Activated naive CD4-positive, alpha-beta T cell treated with anti-CD3 and anti-CD28 coated beads for 36 hours (primary cell): ENCODE measurements at regions of chr1 and their contacts with region 1.

Region 1: DNA sequence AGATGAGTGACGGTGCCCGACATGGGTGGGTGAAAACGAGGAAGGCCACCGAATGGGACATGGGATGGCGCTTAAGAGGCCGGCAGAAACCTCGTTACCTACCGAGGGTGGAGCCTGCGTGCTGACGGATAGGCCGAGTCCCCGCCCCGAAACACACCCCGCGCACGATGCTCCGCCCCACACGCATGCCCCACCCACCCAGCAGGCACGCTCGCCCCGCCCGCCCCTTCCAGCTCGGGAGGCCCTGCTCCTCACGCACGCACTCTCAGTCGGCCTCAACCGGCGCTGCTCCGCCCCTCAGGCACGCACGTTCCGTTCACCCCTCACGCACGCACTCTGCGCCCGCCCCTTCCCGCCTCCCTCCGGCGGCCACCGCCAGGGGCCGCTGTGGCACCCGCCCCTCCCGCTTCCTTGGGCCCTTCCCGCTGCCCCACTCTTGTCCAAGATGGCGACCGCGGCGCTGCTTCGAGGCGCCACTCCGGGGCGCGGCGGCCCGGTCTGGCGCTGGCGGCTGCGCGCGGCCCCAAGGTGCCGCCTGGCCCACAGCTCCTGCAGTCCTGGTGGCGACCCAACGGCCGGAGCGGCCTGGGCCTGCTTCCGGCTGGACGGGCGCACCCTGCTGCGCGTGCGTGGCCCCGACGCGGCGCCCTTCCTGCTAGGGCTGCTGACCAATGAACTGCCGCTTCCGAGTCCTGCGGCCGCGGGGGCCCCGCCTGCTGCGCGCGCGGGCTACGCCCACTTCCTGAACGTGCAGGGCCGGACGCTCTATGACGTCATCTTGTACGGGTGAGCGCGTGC is at the start of gene IBA57:
- DNase-seq: peak; percentile 99
- H3K4me3 Mint-ChIP-seq: peak within 1 kb of the TSS; percentile 91
- H3K27ac Mint-ChIP-seq: peak within 1 kb of the TSS; percentile 93
- H3K4me1 Mint-ChIP-seq: peaks cover 42% of the 10 kb centered on the region
- H3K27me3 Mint-ChIP-seq: no peaks in the 10 kb centered on the region
- total RNA-seq, gene IBA57: 4.9 to 5.5 TPM

Region 2: DNA sequence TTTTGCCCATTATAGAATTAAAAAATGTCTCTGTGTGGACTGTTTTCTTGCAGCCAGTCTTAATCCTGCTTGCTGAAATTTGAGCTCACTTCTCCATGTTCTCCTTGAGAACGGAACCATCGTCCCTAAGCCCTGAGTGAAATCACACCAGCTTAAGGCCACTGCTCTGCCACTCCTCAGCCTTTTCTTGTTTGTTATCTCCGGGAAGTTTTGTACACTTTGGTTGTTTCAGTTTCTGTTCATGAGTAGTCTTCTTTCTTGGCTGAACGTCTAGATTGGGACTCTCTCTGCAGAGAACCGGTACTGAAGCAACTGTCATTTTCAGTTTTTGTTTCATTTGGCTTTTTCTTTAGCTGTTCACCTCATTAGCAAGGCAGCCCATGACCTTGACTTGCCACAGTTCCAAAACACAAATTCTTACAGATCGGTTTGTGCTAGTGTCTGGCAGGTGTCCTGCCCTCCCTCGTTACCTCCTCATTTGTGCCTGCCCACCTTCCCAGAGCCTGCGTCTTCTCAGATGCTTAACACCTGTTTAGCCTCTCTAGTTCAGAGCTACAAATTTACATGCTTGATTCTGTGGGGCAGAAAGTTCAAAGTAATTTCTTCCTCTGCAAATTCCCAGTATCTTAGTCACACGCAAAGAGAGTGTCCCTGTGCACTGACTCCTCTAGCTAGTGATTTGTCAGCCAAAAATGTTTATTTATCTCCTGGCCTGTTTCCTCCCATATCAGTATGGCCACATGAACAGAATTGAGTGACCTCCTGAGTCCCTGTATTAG is 1282.8 kb before region 1 on chr1:
- CTCF ChIA-PET with region 1: no interaction called
- intact Hi-C with region 1: loop called (anchors 5 kb)
- DNase-seq: peak; percentile 57
- H3K4me3 Mint-ChIP-seq: peak overlapping the region; percentile 74
- H3K27ac Mint-ChIP-seq: peak overlapping the region; percentile 93
- H3K4me1 Mint-ChIP-seq: peaks cover 51% of the 10 kb centered on the region
- H3K27me3 Mint-ChIP-seq: no peaks in the 10 kb centered on the region

Region 3: DNA sequence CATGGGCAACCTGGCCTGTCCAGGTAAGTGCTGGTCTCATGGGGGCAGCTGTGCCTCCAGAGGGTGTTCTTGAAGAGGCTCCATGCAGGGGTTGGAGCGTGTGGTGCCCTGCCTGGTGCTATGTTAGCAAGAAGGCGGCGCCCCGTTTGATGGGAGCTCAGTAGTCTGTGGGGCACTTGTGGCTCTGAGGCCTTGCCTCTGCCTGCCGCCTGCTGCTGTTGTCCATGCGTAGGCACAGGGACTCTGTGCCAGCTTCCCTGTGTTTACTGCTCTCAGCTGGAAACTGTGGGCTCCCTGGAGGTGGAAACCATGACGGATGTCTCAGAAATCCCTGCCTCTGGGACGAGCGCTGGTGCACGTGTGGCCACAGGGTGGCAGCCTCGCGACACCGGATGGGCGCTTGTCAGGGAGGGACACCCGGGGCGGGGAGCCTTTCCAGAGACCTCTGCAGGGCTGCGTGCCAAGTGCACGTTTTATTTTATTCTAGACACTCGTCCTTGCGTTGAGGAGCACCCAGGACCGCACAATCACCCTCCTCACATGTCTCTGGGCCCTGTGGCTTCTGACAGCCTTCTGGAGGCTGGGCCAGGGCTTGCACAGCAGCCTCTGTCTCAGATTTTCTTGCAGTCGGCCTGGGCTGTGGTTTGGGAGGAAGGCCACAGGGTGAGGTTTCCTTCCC is 403.2 kb before region 1 on chr1:
- CTCF ChIA-PET with region 1: no interaction called
- intact Hi-C with region 1: loop called (anchors 10 kb)
- DNase-seq: peak; percentile 91
- H3K4me3 Mint-ChIP-seq: no peak overlapping the region
- H3K27ac Mint-ChIP-seq: no peak overlapping the region
- H3K4me1 Mint-ChIP-seq: peaks cover 86% of the 10 kb centered on the region
- H3K27me3 Mint-ChIP-seq: no peaks in the 10 kb centered on the region

Region 4: GRCh38 chr1:228102791-228103620 is 62.6 kb before region 1 on chr1 and contains the start of gene C1orf35:
- CTCF ChIA-PET with region 1: interaction called, 3 read pairs
- intact Hi-C with region 1: loop called (anchors 1 kb)
- DNase-seq: peak; percentile 96
- H3K4me3 Mint-ChIP-seq: peak within 1 kb of the TSS; percentile 92
- H3K27ac Mint-ChIP-seq: peak within 1 kb of the TSS; percentile 87
- H3K4me1 Mint-ChIP-seq: peaks cover 28% of the 10 kb centered on the region
- H3K27me3 Mint-ChIP-seq: no peaks in the 10 kb centered on the region
- total RNA-seq, gene C1orf35: 14.5 to 16.2 TPM

Region 5: DNA sequence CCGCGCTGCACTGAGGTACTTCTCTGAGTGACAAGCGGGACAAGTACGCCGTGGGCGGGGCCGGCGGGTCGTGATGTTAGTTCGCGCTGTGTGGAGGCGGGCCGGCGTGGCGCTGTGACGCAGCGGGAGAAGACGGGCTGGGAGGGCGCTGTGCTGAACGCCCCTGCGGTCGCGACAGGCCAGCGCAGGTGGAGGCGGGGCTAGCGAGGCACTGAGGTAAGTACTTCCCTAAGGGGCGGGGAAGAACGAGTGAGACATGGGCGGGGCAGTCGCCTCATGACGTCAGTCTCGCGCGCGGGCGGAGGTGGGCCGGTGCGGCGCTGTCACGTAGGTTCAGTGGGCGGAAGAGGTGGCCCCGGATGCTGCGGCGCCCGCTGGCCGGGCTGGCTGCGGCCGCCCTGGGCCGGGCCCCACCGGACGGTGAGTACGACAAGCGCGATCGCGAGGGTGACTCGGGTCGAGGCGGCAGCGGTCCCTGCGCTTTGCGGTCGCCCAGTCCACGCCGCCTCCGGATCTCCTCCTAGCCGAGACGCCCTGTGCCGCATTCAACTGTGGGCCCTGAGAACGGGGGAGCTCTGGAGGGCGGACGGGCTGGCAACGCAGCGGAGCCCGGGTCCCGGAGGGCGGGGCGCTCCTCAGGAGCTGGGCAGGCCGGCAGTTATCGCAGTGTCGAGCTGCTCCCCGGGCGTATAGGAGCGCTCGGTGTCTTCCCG is 25.5 kb before region 1 on chr1 and contains the start of gene GUK1:
- CTCF ChIA-PET with region 1: interaction called, 9 read pairs
- intact Hi-C with region 1: loop called (anchors 1 kb)
- DNase-seq: peak; percentile 100
- H3K4me3 Mint-ChIP-seq: peak within 1 kb of the TSS; percentile 97
- H3K27ac Mint-ChIP-seq: peak within 1 kb of the TSS; percentile 98
- H3K4me1 Mint-ChIP-seq: peaks cover 25% of the 10 kb centered on the region
- H3K27me3 Mint-ChIP-seq: no peaks in the 10 kb centered on the region
- total RNA-seq, gene GUK1: 206 TPM

Region 6: DNA sequence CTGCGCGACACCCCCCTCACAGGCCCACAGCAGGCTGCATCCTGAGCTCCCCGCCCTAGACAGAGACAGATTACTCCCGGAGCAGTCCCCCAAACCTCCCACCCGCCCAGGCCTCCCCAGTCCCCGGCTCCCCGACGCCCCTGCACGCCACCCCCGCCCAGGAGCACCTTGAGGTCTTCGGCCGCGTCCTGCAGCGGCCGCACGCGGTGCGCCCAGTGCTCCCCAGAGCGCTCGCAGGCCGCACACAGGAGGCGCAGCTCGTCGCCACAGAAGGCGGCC is 240.4 kb after region 1 on chr1:
- CTCF ChIA-PET with region 1: no interaction called
- intact Hi-C with region 1: loop called (anchors 1 kb)
- DNase-seq: peak; percentile 17
- H3K4me3 Mint-ChIP-seq: peak overlapping the region; percentile 87
- H3K27ac Mint-ChIP-seq: peak overlapping the region; percentile 73
- H3K4me1 Mint-ChIP-seq: peaks cover 43% of the 10 kb centered on the region
- H3K27me3 Mint-ChIP-seq: no peaks in the 10 kb centered on the region